Head of caudate nucleus (tissue), 42 donors: ENCODE measurements at regions of chr2 and their contacts with region 1.

Region 1: DNA sequence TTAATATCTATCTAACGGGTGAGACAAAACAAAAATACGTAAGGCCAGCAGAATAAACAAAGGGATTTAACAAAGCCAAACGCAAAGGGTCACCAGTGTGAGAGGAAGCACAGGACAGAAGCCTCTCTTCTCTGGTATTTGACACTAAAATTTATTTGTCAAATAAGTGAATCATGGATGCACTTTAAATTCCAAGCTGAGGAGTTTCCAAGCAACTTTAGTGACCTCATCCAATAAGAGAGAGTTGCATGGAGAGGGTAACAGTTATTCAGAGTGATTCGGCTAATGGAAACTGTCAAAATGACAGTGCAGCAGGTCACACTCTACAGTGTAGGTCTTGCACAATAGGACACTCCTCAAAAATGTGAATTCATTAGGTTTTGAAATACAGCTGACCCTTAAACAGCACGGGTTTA is 103.9 kb upstream of the ACVR1C start:
- DNase-seq: no peak

Region 2: DNA sequence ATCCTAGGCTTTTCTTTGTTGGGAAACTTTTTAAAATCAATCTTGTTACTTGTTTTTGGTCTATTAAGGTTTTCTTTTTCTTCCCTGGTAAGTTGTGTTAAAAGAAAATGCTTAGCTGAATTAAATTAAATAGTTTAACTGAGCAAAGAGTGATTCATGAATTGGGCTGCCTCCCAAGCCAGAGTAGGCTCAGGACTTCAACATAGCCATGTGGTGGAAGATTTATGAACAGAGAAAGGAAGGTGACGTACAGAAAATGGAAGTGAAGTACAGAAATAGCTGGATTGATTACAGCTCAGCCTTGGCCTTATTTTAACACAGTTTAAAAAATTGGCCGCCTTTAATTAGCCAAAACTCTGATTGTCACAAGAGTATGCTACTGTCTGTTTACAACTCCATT is 503.0 kb before region 1 on chr2:
- intact Hi-C with region 1: loop called (anchors 10 kb)
- DNase-seq: no peak

Region 3: DNA sequence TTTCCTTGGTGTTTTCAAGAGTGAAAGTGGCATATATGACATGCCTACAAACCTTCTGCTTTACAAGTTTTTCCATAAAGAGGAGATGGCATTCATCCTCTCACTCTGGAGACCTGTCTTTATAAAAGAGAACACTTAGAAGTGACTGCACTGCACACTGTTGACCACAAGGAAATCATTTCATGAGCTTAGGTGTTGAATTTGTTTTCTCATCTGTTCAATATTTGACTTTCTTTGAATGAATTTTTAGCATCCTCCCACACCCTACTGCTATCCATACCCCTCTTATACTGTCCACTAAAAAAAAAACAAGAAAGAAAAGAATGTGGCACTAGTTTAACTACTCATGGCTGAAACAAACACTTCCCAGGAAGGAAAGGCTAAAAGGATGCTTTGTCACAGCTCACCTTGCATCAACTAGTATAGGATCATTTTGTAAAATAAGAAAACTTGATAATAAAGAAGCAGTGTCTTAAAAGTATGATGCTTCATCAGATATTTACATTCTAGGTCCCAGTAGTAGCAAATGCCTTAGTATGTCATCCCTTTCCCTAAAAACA is 60.6 kb after region 1 on chr2:
- intact Hi-C with region 1: no loop called
- DNase-seq: no peak

Region 4: DNA sequence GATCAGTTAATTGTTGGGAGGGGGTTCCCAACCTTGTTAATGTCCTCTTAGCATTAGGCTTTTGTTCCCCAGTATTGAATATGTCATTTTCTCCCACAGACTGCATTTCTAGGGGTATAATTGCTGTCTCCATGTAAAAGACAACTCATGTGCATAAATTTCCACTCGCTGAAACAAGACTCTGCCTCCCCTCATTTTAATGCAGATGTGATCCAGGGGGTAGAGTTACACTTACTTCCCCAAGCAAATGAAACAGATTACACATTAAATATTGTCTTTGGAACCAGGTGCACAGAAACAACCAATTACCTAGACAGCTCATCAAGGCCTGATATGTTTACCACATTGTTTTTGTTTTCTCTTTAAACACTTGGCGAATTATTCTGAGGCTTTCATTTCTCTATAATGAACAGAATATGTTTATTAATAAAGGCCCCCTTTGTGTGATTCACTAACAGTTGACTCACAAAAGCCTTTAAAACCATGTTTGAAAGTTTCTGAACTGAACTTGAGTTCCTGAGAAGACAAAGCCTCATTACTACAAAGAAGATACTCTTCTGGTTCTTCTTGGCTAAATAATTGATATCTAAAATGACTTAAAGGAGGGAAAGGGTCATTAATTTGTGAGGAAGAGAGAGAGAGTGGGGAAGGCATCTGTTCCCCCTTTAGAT is 158.5 kb after region 1 on chr2:
- intact Hi-C with region 1: no loop called
- DNase-seq: no peak